Activated B cell treated with CpG ODN at 0.5 μM for 24 hours (primary cell): ENCODE measurements at regions of chr2 and their contacts with region 1.

Region 1: DNA sequence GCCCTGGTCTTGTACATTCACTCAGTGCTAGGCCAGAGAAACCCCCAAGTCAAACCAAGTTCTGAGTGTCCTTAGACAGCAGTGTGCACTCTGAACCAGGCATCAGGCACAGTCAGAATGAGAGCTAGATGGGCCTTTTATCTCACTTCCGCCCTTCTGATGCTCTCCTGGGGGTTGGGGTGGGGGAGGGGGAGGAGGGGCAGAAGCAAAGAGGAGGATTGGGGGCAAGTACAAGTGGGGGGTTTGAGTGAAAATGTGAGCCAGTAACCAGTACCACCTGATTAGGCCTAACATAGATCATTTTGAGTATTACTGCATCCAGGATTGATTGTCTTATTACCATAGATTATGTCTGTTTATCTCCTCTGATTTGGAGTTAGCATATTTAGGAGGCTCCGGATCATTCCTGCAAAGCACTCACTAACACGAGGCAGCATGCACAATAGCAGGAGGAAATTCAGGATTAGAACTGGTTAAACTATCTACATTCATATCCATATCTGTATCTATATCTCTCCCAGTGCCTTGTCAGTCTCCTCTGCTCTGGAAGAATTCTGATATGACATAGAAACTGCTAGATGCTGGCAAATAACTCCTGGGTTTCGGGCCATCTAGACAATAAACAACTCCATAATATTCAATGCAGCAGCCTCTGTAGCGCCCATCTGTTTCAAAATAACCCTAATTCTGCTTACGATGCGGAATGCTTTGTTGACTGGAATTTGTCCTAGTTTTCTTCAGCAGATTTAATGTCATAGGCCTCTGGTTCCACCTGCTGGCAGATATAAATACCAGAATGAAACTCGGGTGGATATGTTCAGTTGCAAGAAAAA is 149.1 kb downstream of the RHBDD1 start:
- DNase-seq: no peak
- ATAC-seq: peak; percentile 92
- H3K4me3 Mint-ChIP-seq: no peak overlapping the region
- H3K27ac Mint-ChIP-seq: peak overlapping the region; percentile 80
- H3K4me1 Mint-ChIP-seq: peaks cover 24% of the 10 kb centered on the region
- H3K27me3 Mint-ChIP-seq: no peaks in the 10 kb centered on the region
- CTCF ChIP-seq: peak; percentile 28

Region 2: DNA sequence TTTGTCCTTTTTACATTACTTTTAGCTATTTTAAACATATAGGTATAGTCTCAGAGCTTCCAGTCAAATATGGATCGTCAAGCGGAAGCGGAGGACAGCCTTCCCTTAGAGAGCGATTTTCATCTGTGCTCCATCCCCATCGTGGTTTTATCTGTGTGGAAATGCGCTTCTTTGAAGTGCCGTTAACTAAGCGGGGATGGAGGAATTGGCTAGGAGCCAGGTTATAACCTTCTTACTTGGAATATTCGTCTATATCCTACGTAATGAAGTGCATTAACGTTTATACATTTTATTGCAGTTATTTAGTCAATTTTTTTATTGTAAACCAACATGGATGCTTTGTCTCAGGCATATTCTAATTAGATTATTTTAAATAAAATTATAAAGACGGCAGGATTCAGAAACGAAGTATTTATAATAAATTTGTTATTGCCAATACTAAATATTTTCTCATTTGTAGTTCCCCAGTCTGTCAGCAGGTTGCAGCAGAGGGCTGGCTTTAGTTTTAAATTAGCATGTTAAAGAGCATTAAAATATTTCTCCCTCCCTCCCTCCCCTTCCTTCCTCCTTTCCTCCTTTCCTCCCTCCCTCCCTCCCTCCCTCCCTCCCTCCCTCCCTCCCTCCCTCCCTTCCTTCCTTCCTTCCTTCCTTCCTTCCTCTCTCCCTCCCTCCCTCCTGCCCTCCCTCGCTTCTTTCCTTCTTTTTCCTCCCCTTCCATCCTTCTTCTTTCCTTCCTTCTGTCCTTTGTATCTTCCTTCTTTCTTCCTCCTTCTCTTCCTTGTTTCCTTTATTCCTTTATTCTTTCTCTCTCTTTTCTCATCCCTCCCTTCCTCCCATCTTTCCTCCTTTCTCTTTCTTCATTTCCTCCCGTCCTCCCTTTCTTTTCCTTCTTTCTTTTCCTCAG is 1862.1 kb before region 1 on chr2:
- CTCF ChIA-PET with region 1: no interaction called
- POLR2A ChIA-PET with region 1: no interaction called
- intact Hi-C with region 1: loop called (anchors 10 kb)
- DNase-seq: no peak
- ATAC-seq: no peak
- H3K4me3 Mint-ChIP-seq: no peak overlapping the region
- H3K27ac Mint-ChIP-seq: no peak overlapping the region
- H3K4me1 Mint-ChIP-seq: no peaks in the 10 kb centered on the region
- H3K27me3 Mint-ChIP-seq: peaks cover 6% of the 10 kb centered on the region
- CTCF ChIP-seq: no peak

Region 3: GRCh38 chr2:225668606-225669266 is 1316.2 kb before region 1 on chr2:
- CTCF ChIA-PET with region 1: interaction called, 9 read pairs
- POLR2A ChIA-PET with region 1: no interaction called
- intact Hi-C with region 1: loop called (anchors 1 kb)
- DNase-seq: no peak
- ATAC-seq: peak; percentile 79
- H3K4me3 Mint-ChIP-seq: no peak overlapping the region
- H3K27ac Mint-ChIP-seq: no peak overlapping the region
- H3K4me1 Mint-ChIP-seq: no peaks in the 10 kb centered on the region
- H3K27me3 Mint-ChIP-seq: peaks cover 5% of the 10 kb centered on the region
- CTCF ChIP-seq: peak; percentile 29

Region 4: DNA sequence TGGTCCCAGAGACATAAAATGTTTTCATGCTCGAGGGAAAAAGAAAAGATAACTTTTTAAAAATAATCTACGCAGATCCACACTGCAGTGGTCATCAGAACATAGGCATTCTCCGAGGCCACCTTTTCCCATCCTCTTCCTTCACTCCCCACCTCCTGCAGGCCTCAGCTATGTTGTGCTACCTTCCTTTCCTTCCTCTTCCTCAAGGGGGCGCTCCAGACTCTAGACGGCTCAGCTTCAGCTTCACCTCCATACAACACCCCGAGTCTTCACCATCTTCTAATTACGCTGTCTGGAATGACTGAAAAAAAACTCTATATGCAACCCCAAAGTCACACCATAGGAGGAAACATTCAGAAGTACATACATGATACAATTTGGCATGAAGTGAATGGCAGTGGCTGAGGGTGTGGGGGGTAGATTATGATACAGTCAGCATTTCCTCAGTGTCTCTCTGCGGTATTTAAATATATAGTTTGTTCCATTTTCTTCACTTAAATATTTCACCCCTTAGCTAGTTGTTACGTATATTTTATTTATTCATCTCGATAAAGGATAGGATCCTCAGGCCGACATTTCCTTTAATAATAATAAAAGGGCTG is 769.0 kb before region 1 on chr2:
- CTCF ChIA-PET with region 1: interaction called, 7 read pairs
- POLR2A ChIA-PET with region 1: no interaction called
- intact Hi-C with region 1: loop called (anchors 1 kb)
- DNase-seq: peak; percentile 15
- ATAC-seq: peak; percentile 69
- H3K4me3 Mint-ChIP-seq: no peak overlapping the region
- H3K27ac Mint-ChIP-seq: no peak overlapping the region
- H3K4me1 Mint-ChIP-seq: no peaks in the 10 kb centered on the region
- H3K27me3 Mint-ChIP-seq: peaks cover 2% of the 10 kb centered on the region
- CTCF ChIP-seq: no peak

Region 5: GRCh38 chr2:226256709-226257395 is 728.1 kb before region 1 on chr2:
- CTCF ChIA-PET with region 1: no interaction called
- POLR2A ChIA-PET with region 1: no interaction called
- intact Hi-C with region 1: no loop called
- DNase-seq: no peak
- ATAC-seq: no peak
- H3K4me3 Mint-ChIP-seq: no peak overlapping the region
- H3K27ac Mint-ChIP-seq: no peak overlapping the region
- H3K4me1 Mint-ChIP-seq: no peaks in the 10 kb centered on the region
- H3K27me3 Mint-ChIP-seq: peaks cover 2% of the 10 kb centered on the region
- CTCF ChIP-seq: no peak

Region 6: GRCh38 chr2:226554701-226555100 is 430.3 kb before region 1 on chr2:
- CTCF ChIA-PET with region 1: no interaction called
- POLR2A ChIA-PET with region 1: no interaction called
- intact Hi-C with region 1: loop called (anchors 10 kb)
- DNase-seq: no peak
- ATAC-seq: no peak
- H3K4me3 Mint-ChIP-seq: no peak overlapping the region
- H3K27ac Mint-ChIP-seq: no peak overlapping the region
- H3K4me1 Mint-ChIP-seq: no peaks in the 10 kb centered on the region
- H3K27me3 Mint-ChIP-seq: peaks cover 8% of the 10 kb centered on the region
- CTCF ChIP-seq: no peak

Region 7: GRCh38 chr2:226813148-226813701 is 171.7 kb before region 1 on chr2:
- CTCF ChIA-PET with region 1: interaction called, 4 read pairs
- POLR2A ChIA-PET with region 1: no interaction called
- intact Hi-C with region 1: loop called (anchors 1 kb)
- DNase-seq: no peak
- ATAC-seq: no peak
- H3K4me3 Mint-ChIP-seq: no peak overlapping the region
- H3K27ac Mint-ChIP-seq: no peak overlapping the region
- H3K4me1 Mint-ChIP-seq: no peaks in the 10 kb centered on the region
- H3K27me3 Mint-ChIP-seq: peaks cover 20% of the 10 kb centered on the region
- CTCF ChIP-seq: no peak